Ovary (tissue), 10 donors: ENCODE measurements at regions of chr18 and their contacts with region 1.

Region 1: GRCh38 chr18:49024804-49025421 is 74.1 kb upstream of the SMAD7 start:
- DNase-seq: peak in 1 of 5 donors; percentile 25
- H3K4me3 ChIP-seq: no peak overlapping the region
- H3K27ac ChIP-seq: no peak overlapping the region
- H3K4me1 ChIP-seq: no peaks in the 10 kb centered on the region
- H3K27me3 ChIP-seq: no peaks in the 10 kb centered on the region
- CTCF ChIP-seq: no peak
- EP300 ChIP-seq: no peak
- POLR2A ChIP-seq: no peak

Region 2: GRCh38 chr18:48975649-48976204 is 49.2 kb before region 1 on chr18:
- intact Hi-C with region 1: loop called in 1 of 4 experiments (anchors 5 kb)
- DNase-seq: peak; percentile 65 to 76 (median 74)
- H3K4me3 ChIP-seq: peak overlapping the region; percentile 82
- H3K27ac ChIP-seq: peak overlapping the region; percentile 20 to 62
- H3K4me1 ChIP-seq: peaks cover 10% of the 10 kb centered on the region
- H3K27me3 ChIP-seq: no peaks in the 10 kb centered on the region
- CTCF ChIP-seq: no peak
- EP300 ChIP-seq: no peak
- POLR2A ChIP-seq: no peak